ENCODE measurements at regions of chr17 and their contacts with region 1.

Region 1: DNA sequence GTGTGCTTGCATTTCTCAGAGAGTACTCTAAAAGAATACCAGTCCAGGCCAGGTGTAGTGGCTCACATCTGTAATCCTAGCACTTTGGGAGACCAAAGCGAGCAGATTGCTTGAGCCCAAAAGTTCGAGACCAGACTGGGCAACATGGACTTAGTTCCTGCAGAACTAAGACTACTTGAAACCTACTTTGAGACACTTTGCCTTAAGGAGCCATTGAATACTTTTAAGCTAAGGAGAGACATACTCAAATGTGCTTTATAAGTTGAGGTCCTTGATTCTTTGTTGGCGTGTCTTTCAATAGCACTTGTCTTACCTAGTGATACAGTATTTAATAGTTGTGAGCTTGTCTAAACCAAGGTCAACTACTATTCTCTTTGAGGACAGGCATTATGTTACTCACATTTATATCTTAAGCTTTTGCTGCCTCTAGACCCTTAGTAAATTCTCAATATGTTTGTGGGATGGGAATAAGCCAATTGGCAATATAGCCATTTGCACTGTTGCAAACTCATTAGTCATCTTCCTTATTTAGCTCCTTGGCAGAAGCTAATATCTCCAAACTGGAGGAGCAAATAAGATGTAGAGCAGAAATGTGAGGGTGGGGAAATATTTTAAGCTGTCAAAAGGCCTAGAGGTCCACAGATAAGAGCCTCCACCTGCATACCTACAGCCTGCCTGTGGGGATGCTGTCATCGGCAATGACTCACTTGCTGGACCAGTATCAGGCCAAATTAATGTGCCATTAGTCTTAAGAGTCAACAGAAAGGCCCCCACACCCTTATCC is 16.3 kb downstream of the SCPEP1 start:
- DNase-seq: no peak
- H3K4me3 ChIP-seq: no peak overlapping the region
- H3K27ac ChIP-seq: no peak overlapping the region
- H3K4me1 ChIP-seq: no peaks in the 10 kb centered on the region
- H3K27me3 ChIP-seq: no peaks in the 10 kb centered on the region
- CTCF ChIP-seq: no peak

Region 2: DNA sequence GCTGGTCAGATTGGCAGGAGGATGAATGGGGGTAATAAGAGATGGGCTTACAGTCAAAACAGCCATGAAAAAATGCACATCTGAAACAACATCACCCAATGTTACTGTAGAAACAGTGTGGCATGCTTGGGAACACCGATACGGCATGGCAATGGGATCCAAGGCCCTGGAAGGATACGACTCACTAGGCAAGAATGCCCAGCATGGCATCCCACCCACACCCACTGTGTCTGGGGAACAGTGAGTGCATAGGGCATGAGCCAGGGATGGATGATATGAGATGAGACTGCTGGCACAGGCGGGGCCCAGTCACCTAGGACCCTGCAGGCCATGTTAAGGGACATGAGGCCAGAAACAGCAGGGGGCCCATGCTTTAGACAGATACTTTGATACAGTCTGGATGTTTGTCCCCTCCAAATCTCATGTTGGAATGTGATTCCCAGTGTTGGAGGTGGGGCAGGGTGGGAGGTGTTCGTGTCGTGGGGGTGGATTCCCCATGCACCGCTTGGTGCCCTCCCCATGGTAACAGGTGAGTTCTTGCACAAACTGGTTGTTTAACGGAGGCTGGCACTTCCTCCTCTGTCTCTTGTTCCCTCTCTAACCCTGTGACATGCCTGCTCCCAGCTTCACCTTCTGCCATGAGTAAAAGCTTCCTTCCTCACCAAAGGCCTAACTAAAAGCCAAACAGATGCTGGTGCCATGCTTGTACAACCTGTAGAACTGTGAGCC is 91.7 kb before region 1 on chr17:
- CTCF ChIA-PET with region 1: no interaction called
- dilution Hi-C with region 1: loop called (anchors 5 kb)
- in situ Hi-C with region 1: no loop called
- intact Hi-C with region 1: no loop called
- DNase-seq: peak; percentile 72
- H3K4me3 ChIP-seq: no peak overlapping the region
- H3K27ac ChIP-seq: peak overlapping the region; percentile 71
- H3K4me1 ChIP-seq: peaks cover 15% of the 10 kb centered on the region
- H3K27me3 ChIP-seq: no peaks in the 10 kb centered on the region
- CTCF ChIP-seq: no peak

Region 3: DNA sequence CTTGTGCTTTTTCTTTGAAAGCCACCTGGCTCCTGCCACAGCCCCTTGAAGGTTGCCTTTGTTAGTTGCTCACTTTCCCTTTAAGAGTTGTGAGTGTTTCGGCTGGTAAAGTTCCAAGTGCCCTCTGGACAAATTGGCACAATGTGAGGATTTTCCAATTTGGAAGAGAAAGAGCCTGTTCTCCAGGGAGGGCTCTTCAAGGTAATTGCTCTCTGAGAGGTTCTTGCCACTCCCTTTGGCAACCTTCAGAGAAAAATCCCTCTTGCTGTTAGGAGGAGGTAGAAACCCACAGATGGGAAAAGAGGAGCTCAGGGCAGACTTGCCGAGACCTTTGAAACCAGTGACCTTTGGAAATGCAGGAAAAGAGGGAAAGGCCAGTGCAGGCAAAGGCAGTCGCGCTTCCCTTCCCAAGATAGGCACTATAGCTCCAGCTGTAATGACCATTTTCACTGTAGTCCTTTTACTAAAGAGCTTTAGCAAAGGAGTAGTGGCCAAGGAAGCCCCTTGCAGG is 41.8 kb after region 1 on chr17:
- CTCF ChIA-PET with region 1: no interaction called
- dilution Hi-C with region 1: loop called (anchors 5 kb)
- in situ Hi-C with region 1: no loop called
- intact Hi-C with region 1: no loop called
- DNase-seq: peak; percentile 12
- H3K4me3 ChIP-seq: no peak overlapping the region
- H3K27ac ChIP-seq: no peak overlapping the region
- H3K4me1 ChIP-seq: peaks cover 4% of the 10 kb centered on the region
- H3K27me3 ChIP-seq: no peaks in the 10 kb centered on the region
- CTCF ChIP-seq: no peak

Measured in mammary epithelial cell (primary cell).